Right ventricle myocardium inferior (tissue), 1 donor: ENCODE measurements at regions of chr20 and their contacts with region 1.

Region 1: DNA sequence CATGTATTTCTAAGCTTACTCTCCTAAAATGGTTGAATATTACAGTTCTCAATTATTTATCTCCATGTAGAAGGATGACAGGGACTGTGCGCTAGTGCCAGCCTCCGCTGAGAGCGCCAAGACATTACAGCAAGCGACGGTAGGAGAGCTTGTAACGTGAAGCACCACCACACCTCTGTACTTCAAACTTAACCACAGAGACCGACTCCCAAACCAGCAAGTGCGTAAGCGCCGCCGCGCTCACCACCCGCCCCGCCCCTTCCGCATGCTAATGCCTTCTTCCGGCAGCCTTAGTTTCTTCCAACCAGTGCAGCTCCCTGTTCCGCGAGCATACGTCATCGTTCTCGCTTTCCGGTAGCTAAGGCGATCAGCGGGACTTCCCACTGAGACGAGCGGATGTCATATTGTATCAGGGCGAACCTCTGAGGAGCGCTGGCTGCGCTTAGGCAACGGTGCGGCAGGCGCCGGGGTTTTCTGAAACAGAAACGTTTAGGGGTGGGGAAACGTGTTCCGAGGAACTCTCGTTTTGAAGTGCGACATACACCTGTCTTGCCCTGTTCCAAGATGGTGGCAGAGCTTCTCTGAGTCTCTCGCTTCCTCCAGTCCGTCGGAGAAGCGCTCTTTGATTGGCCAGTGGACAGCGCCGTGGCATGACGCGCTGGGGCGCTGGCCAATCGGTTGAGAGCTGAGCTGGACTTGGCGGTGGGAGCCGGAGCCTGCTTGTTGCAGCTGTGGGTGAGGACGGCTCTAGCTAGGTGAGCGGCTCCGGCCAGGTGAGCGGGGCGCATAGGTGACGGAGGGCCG is at the start of gene SEC23B:
- DNase-seq: peak; percentile 98
- ATAC-seq: peak; percentile 99
- total RNA-seq, gene SEC23B: 8.9 TPM

Region 2: GRCh38 chr20:18466894-18467730 is 40.3 kb before region 1 on chr20 and contains the starts of genes DZANK1 and POLR3F:
- intact Hi-C with region 1: loop called (anchors 2 kb)
- DNase-seq: peak; percentile 98
- ATAC-seq: peak; percentile 100
- total RNA-seq, gene DZANK1: 1.1 TPM
- total RNA-seq, gene POLR3F: 7.7 TPM

Region 3: GRCh38 chr20:18566892-18567742 is 59.7 kb after region 1 on chr20 and contains the start of gene SMIM26:
- intact Hi-C with region 1: loop called (anchors 2 kb)
- DNase-seq: peak; percentile 97
- ATAC-seq: peak; percentile 100
- total RNA-seq, gene SMIM26: 111 TPM